Naive thymus-derived CD4-positive, alpha-beta T cell (primary cell): ENCODE measurements at regions of chr2 and their contacts with region 1.

Region 1: GRCh38 chr2:25878361-25879132 is at the start of gene ASXL2:
- DNase-seq: peak; percentile 95 to 98 (median 98)
- ATAC-seq: peak; percentile 95
- H3K4me3 ChIP-seq: peak within 1 kb of the TSS; percentile 94
- H3K4me3 Mint-ChIP-seq: peak within 1 kb of the TSS; percentile 91 to 98 (median 97)
- H3K27ac ChIP-seq: peak within 1 kb of the TSS; percentile 99
- H3K27ac Mint-ChIP-seq: peak within 1 kb of the TSS; percentile 93 to 99 (median 99)
- H3K4me1 ChIP-seq: peaks cover 16 to 21% of the 10 kb centered on the region in 2 donors
- H3K4me1 Mint-ChIP-seq: peaks cover 31 to 50% (median 40%) of the 10 kb centered on the region in 7 donors
- H3K27me3 ChIP-seq: no peaks in the 10 kb centered on the region
- H3K27me3 Mint-ChIP-seq: no peaks in the 10 kb centered on the region
- total RNA-seq, gene ASXL2: 29.2 to 62.1 (median 48.5) TPM

Region 2: GRCh38 chr2:24490674-24491625 is 1387.6 kb before region 1 on chr2 and contains the start of gene NCOA1:
- CTCF ChIA-PET with region 1: no interaction called
- POLR2A ChIA-PET with region 1: no interaction called
- intact Hi-C with region 1: loop called in 1 of 2 experiments (anchors 5 kb)
- DNase-seq: peak; percentile 82 to 92 (median 90)
- ATAC-seq: peak; percentile 91
- H3K4me3 ChIP-seq: peak within 1 kb of the TSS; percentile 63
- H3K4me3 Mint-ChIP-seq: peak within 1 kb of the TSS; percentile 80 to 95 (median 90)
- H3K27ac ChIP-seq: peak within 1 kb of the TSS; percentile 93
- H3K27ac Mint-ChIP-seq: peak within 1 kb of the TSS; percentile 87 to 98 (median 93)
- H3K4me1 ChIP-seq: peaks cover 26 to 48% of the 10 kb centered on the region in 2 donors
- H3K4me1 Mint-ChIP-seq: peaks cover 46 to 62% (median 59%) of the 10 kb centered on the region in 7 donors
- H3K27me3 ChIP-seq: no peaks in the 10 kb centered on the region
- H3K27me3 Mint-ChIP-seq: peaks cover 0 to 11% (median 0%) of the 10 kb centered on the region in 5 donors
- total RNA-seq, gene NCOA1: 20.9 to 72.8 (median 46.6) TPM

Region 3: GRCh38 chr2:25362049-25362433 is 516.5 kb before region 1 on chr2:
- CTCF ChIA-PET with region 1: no interaction called
- POLR2A ChIA-PET with region 1: no interaction called
- intact Hi-C with region 1: loop called in 1 of 2 experiments (anchors 1 kb)
- DNase-seq: peak; percentile 86 to 99 (median 93)
- ATAC-seq: peak; percentile 98
- H3K4me3 ChIP-seq: peak overlapping the region; percentile 78
- H3K4me3 Mint-ChIP-seq: peak overlapping the region; percentile 83 to 95 (median 89)
- H3K27ac ChIP-seq: peak overlapping the region; percentile 81
- H3K27ac Mint-ChIP-seq: peak overlapping the region; percentile 84 to 96 (median 92)
- H3K4me1 ChIP-seq: peaks cover 3 to 4% of the 10 kb centered on the region in 2 donors
- H3K4me1 Mint-ChIP-seq: peaks cover 11 to 32% (median 25%) of the 10 kb centered on the region in 7 donors
- H3K27me3 ChIP-seq: no peaks in the 10 kb centered on the region
- H3K27me3 Mint-ChIP-seq: no peaks in the 10 kb centered on the region

Region 4: DNA sequence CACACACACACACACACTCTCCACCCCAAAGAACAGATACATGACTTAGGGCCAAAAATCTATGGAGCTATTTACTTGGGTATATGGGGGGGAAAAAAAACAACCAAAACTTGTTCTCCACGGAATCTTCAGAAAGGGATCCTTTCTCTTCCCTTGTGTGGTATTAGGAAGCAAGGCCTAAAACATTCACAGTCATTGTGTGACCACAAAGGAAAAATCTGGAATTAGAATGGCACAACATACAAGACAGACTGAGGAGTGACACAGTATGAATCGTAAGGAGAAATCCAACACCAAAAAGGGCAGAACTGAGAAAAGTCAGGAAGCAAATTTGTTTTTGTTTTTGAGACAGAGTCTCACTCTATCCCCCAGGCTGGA is 70.6 kb before region 1 on chr2:
- CTCF ChIA-PET with region 1: no interaction called
- POLR2A ChIA-PET with region 1: no interaction called
- intact Hi-C with region 1: no loop called
- DNase-seq: no peak
- ATAC-seq: no peak
- H3K4me3 ChIP-seq: no peak overlapping the region
- H3K4me3 Mint-ChIP-seq: no peak overlapping the region
- H3K27ac ChIP-seq: no peak overlapping the region
- H3K27ac Mint-ChIP-seq: no peak overlapping the region
- H3K4me1 ChIP-seq: peaks cover 0 to 9% of the 10 kb centered on the region in 2 donors
- H3K4me1 Mint-ChIP-seq: peaks cover 12 to 66% (median 43%) of the 10 kb centered on the region in 7 donors
- H3K27me3 ChIP-seq: no peaks in the 10 kb centered on the region
- H3K27me3 Mint-ChIP-seq: no peaks in the 10 kb centered on the region

Region 5: DNA sequence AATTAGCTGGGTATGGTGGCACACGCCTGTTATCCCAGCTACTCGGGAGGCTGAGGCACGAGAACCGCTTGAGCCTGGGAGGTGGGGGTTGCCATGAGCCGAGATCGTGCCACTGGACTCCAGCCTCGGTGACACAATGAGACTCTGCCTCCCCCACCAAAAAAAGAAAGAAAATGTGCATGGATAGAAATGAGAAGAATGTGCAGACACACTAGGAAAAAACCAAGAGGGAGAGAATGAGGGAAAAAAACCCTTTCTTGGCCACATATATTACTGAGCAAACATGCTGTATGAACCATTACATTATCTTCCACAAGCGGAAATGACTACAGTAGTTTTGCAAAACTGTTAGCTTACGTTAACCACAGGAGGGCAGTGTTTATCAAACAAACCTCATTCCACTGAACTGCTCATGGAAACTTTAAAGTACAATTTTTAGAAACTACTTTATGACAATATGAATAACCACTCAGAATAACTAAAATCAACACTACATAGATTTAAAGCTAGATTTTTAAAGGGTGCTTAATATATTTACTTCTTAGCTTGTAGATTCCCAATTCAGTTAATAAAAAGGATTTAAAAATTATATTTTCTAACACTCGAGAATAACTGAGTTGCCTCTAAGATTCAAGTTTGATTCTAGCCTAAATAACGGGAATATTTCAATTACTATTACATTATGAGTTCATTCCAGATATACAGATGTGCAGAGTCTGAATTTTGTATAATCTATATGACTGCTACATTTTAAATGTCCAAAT is 26.6 kb before region 1 on chr2:
- CTCF ChIA-PET with region 1: interaction called, 16 read pairs
- POLR2A ChIA-PET with region 1: interaction called, 10 read pairs
- intact Hi-C with region 1: loop called (anchors 1 kb)
- DNase-seq: peak in 8 of 9 donors; percentile 34 to 77 (median 67)
- ATAC-seq: peak; percentile 99
- H3K4me3 ChIP-seq: no peak overlapping the region
- H3K4me3 Mint-ChIP-seq: peak overlapping the region in 9 of 10 donors; percentile 43 to 83 (median 74)
- H3K27ac ChIP-seq: peak overlapping the region; percentile 17
- H3K27ac Mint-ChIP-seq: peak overlapping the region in 6 of 9 donors; percentile 21 to 82 (median 50)
- H3K4me1 ChIP-seq: peaks cover 10 to 22% of the 10 kb centered on the region in 2 donors
- H3K4me1 Mint-ChIP-seq: peaks cover 38 to 55% (median 48%) of the 10 kb centered on the region in 7 donors
- H3K27me3 ChIP-seq: no peaks in the 10 kb centered on the region
- H3K27me3 Mint-ChIP-seq: no peaks in the 10 kb centered on the region

Region 6: GRCh38 chr2:26033818-26034636 is 155.5 kb after region 1 on chr2 and contains the start of gene RAB10:
- CTCF ChIA-PET with region 1: interaction called, 5 read pairs
- POLR2A ChIA-PET with region 1: interaction called, 19 read pairs
- intact Hi-C with region 1: loop called (anchors 1 kb)
- DNase-seq: peak; percentile 98 to 100 (median 99)
- ATAC-seq: peak; percentile 95
- H3K4me3 ChIP-seq: peak within 1 kb of the TSS; percentile 96
- H3K4me3 Mint-ChIP-seq: peak within 1 kb of the TSS; percentile 90 to 99 (median 96)
- H3K27ac ChIP-seq: peak within 1 kb of the TSS; percentile 90
- H3K27ac Mint-ChIP-seq: peak within 1 kb of the TSS; percentile 86 to 97 (median 95)
- H3K4me1 ChIP-seq: peaks cover 18 to 24% of the 10 kb centered on the region in 2 donors
- H3K4me1 Mint-ChIP-seq: peaks cover 31 to 48% (median 41%) of the 10 kb centered on the region in 7 donors
- H3K27me3 ChIP-seq: no peaks in the 10 kb centered on the region
- H3K27me3 Mint-ChIP-seq: peaks cover 0 to 2% (median 0%) of the 10 kb centered on the region in 5 donors
- total RNA-seq, gene RAB10: 25.6 to 108 (median 60.5) TPM

Region 7: GRCh38 chr2:27032495-27033252 is 1154.1 kb after region 1 on chr2 and contains the start of gene TMEM214:
- CTCF ChIA-PET with region 1: no interaction called
- POLR2A ChIA-PET with region 1: no interaction called
- intact Hi-C with region 1: loop called in 1 of 2 experiments (anchors 5 kb)
- DNase-seq: peak; percentile 54 to 88 (median 63)
- ATAC-seq: peak; percentile 97
- H3K4me3 ChIP-seq: peak within 1 kb of the TSS; percentile 99
- H3K4me3 Mint-ChIP-seq: peak within 1 kb of the TSS; percentile 91 to 97 (median 93)
- H3K27ac ChIP-seq: peak within 1 kb of the TSS; percentile 87
- H3K27ac Mint-ChIP-seq: peak within 1 kb of the TSS; percentile 84 to 95 (median 91)
- H3K4me1 ChIP-seq: peaks cover 11 to 19% of the 10 kb centered on the region in 2 donors
- H3K4me1 Mint-ChIP-seq: peaks cover 24 to 63% (median 41%) of the 10 kb centered on the region in 7 donors
- H3K27me3 ChIP-seq: no peaks in the 10 kb centered on the region
- H3K27me3 Mint-ChIP-seq: no peaks in the 10 kb centered on the region
- total RNA-seq, gene TMEM214: 36.7 to 114 (median 67.5) TPM